PC-9 (cell line): ENCODE measurements at regions of chr20 and their contacts with region 1.

Region 1: GRCh38 chr20:1164871-1165270 is 19.9 kb downstream of the TMEM74B start:
- DNase-seq: no peak
- H3K4me3 ChIP-seq: no peak overlapping the region
- H3K27ac ChIP-seq: no peak overlapping the region
- H3K4me1 ChIP-seq: no peaks in the 10 kb centered on the region
- H3K27me3 ChIP-seq: no peaks in the 10 kb centered on the region
- CTCF ChIP-seq: no peak

Region 2: DNA sequence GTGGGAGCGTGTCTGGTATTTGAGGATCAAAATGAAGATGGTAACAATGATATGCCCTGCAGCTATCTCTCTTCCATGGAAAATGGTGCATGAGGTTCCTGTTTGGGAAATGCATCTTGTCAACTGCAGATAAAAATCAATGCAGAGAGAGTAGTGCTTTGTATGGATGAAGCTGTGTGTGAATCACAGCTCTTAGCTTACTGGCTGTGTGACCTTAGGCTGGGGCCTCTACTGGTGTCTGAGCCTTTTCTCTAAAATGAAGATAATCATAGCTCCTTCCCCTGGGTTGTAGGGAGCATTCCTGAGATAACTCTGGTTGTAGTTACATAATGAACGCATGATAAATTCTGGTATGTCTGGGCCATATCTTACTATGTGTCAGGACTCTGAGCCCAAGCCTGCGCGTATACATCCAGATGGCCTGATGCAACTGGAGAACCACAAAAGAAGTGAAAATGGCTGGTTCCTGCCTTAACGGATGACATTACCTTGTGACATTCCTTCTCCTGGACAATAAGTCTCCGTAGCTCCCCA is 268.3 kb before region 1 on chr20:
- CTCF ChIA-PET with region 1: no interaction called
- POLR2A ChIA-PET with region 1: no interaction called
- intact Hi-C with region 1: no loop called
- DNase-seq: no peak
- H3K4me3 ChIP-seq: no peak overlapping the region
- H3K27ac ChIP-seq: no peak overlapping the region
- H3K4me1 ChIP-seq: no peaks in the 10 kb centered on the region
- H3K27me3 ChIP-seq: peaks cover 12% of the 10 kb centered on the region
- CTCF ChIP-seq: no peak

Region 3: DNA sequence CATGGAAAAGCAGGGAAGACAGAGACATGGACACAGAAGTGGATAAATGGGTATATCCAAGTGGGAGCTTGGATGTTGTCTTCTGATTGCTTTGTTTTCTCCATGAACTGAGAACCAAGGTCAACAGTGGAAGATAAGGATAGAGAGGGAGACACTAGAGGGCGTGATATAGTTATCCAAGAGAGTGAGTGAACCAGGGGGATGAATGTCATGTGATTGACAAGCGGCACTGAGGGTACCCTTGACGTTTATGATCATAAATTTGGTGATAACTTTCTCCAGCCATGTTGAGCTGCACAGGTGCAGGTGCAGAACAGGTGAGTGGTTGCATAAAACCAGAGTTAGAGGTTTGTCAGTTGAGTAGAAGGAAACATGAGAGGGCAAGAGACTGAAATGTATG is 1548.4 kb after region 1 on chr20:
- CTCF ChIA-PET with region 1: no interaction called
- POLR2A ChIA-PET with region 1: interaction called, 12 read pairs
- intact Hi-C with region 1: no loop called
- DNase-seq: no peak
- H3K4me3 ChIP-seq: no peak overlapping the region
- H3K27ac ChIP-seq: no peak overlapping the region
- H3K4me1 ChIP-seq: no peaks in the 10 kb centered on the region
- H3K27me3 ChIP-seq: peaks cover 62% of the 10 kb centered on the region
- CTCF ChIP-seq: no peak; the same call in 1 of the 2 replicates